ENCODE measurements at regions of chr1 and their contacts with region 1.

Region 1: GRCh38 chr1:32247983-32248889 is 1.2 kb downstream of the FAM167B start:
- DNase-seq: peak; percentile 86 to 88
- ATAC-seq: peak; percentile 40 to 66 (median 54)
- H3K4me3 ChIP-seq: peak overlapping the region in 5 of 10 donors; percentile 10 to 31 (median 20)
- H3K27ac ChIP-seq: peak overlapping the region; percentile 66 to 94 (median 92)
- H3K4me1 ChIP-seq: peaks cover 8 to 84% (median 74%) of the 10 kb centered on the region in 9 donors
- H3K27me3 ChIP-seq: no peaks in the 10 kb centered on the region
- CTCF ChIP-seq: peak; percentile 64 to 92 (median 84)

Region 2: DNA sequence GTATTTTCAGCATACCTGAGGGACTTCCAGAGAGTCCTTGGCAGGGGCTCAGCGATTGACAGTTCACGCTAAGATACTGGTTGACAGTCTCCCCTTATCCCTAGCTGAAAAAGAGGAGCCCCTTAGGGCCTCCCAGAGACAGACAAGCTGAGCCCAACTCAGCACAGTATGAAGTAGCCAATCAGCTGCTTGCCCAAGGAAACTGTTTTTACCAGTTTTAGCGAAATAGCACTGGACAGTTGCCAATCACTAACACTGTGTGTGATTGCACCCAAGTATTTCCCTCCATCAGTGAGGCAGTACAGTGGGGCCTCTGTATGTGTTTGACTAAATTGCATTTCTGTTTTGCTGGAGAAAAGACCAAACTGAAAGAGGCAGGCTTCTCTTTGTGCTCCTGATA is 207.5 kb before region 1 on chr1:
- intact Hi-C with region 1: no loop called
- DNase-seq: no peak
- ATAC-seq: peak in 3 of 8 donors; percentile 11 to 33 (median 17)
- H3K4me3 ChIP-seq: no peak overlapping the region
- H3K27ac ChIP-seq: no peak overlapping the region
- H3K4me1 ChIP-seq: peaks cover 0 to 8% (median under 1%) of the 10 kb centered on the region in 9 donors
- H3K27me3 ChIP-seq: no peaks in the 10 kb centered on the region
- CTCF ChIP-seq: no peak

Region 3: GRCh38 chr1:32291708-32292492 is 43.7 kb after region 1 on chr1 and contains the start of gene HDAC1:
- intact Hi-C with region 1: loop called in 4 of 10 experiments (anchors 2 to 10 kb)
- DNase-seq: peak; percentile 95 to 98
- ATAC-seq: peak; percentile 97 to 100 (median 99)
- H3K4me3 ChIP-seq: peak within 1 kb of the TSS; percentile 66 to 96 (median 80)
- H3K27ac ChIP-seq: peak within 1 kb of the TSS; percentile 23 to 91 (median 79)
- H3K4me1 ChIP-seq: peaks cover 0 to 48% (median 11%) of the 10 kb centered on the region in 9 donors
- H3K27me3 ChIP-seq: no peaks in the 10 kb centered on the region
- CTCF ChIP-seq: no peak
- total RNA-seq, gene HDAC1: 27.5 to 43.5 (median 33.0) TPM